Common myeloid progenitor, CD34-positive (primary cell): ENCODE measurements at regions of chr7 and their contacts with region 1.

Region 1: DNA sequence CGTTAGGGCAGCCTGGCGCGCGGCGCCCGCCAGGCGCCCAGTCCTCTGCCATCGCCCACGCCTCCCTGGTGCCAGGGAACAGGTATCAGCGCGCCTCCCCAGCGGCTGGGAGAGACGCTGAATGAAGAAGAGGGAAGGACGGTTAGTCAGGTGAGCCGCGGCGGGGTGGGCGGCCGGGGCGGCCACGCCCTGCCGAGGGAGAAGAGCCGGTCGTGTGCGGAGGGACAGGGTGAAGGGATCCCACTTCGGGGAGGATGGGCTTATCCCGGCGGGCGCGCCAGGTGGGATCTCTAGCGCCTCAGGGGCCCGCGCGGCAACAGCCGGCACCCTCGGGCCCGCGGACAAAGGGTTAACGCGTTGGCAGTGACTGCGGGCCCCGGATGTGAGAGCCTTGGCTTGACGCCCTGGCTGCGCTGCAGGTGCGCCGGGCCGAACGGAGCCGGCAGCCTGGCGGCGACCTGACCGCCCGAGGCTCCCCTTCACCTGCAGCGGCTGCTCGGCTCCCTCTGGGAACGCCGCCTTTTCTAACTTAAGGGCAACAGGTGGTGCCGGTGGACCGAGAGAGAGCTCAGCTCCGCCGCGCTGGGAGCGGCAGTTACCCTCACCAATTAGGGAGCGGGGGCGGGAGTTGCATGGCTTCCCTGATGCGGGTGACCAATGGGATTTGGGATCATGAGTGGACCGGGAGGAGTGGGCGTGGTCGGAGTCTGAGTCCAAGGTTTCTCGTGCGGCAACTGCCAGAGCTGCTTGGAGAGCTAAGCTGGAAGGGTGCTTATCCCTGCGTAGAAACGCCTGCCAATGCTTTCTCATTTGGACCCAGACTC is at the start of gene ARL4A:
- DNase-seq: peak; percentile 97 to 98 (median 97)
- H3K4me3 ChIP-seq: peak within 1 kb of the TSS; percentile 72 to 98 (median 90)
- H3K27ac ChIP-seq: peak within 1 kb of the TSS; percentile 86 to 96
- H3K4me1 ChIP-seq: peaks cover 3 to 31% (median 10%) of the 10 kb centered on the region in 4 experiments
- H3K27me3 ChIP-seq: no peaks in the 10 kb centered on the region

Region 2: DNA sequence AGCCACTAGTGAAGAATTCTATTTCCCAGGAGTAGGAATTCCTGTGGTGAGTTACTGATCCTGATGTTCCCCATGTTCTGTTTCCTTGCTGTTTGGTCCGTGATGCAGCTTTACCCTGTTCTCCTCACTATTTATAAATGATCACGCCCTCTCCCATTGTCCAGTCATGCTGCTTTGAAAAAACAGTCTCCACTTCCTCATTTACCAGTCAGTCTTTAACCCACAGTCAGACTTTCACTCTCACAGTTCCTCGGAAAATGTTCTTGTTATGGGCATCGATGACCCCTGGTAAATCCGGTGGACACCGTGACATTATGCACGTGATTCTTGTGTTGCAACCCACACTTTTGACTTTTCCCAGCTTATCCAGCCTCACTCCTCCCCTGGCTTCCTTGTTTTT is 102.2 kb before region 1 on chr7:
- CTCF ChIA-PET with region 1: no interaction called
- POLR2A ChIA-PET with region 1: no interaction called
- DNase-seq: peak; percentile 25 to 84 (median 73)
- H3K4me3 ChIP-seq: peak overlapping the region in 2 of 7 experiments; percentile 1 to 26
- H3K27ac ChIP-seq: no peak overlapping the region
- H3K4me1 ChIP-seq: peaks cover 0 to 8% (median 6%) of the 10 kb centered on the region in 4 experiments
- H3K27me3 ChIP-seq: no peaks in the 10 kb centered on the region

Region 3: DNA sequence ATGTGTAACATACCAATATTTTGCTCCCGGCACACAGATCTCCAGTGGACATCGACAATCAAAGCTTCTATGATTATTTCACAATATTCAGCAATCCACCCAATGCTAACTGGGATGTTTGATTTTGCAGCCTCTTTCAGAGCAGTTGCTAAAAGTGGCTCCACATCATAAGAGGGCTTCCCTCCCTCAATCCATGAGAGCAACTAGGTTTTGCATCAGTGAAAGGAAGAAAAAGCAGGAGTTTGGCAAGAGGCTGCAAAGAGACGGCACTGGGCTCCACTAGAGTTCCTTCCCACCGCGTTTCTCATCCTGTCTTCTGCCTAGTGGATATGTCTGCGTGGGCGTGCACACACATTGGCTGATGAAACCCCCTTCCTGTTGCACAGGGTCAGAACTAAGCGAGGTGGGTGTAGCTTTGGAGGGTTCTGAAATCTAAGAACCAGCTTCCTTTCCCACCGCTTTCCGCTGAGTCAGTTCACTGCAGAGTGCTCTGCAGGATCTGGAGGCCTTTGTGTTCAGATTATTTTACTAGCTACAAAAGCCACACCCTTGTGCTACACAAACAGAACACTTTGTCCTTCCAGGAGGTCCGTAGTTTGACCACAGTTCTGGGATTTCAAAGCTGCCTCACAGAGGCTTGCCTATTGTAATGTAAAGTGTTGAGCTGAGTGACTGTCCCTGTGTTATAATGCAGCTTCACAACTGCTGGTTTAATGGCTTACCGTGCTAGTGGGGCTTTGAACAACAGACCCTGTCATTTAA is 28.4 kb after region 1 on chr7:
- CTCF ChIA-PET with region 1: interaction called, 11 read pairs
- POLR2A ChIA-PET with region 1: interaction called, 3 read pairs
- DNase-seq: peak; percentile 49 to 78 (median 75)
- H3K4me3 ChIP-seq: peak overlapping the region in 4 of 7 experiments; percentile 17 to 67 (median 50)
- H3K27ac ChIP-seq: peak overlapping the region; percentile 42 to 75
- H3K4me1 ChIP-seq: peaks cover 5 to 39% (median 25%) of the 10 kb centered on the region in 4 experiments
- H3K27me3 ChIP-seq: no peaks in the 10 kb centered on the region

Region 4: GRCh38 chr7:13262929-13263530 is 575.9 kb after region 1 on chr7:
- CTCF ChIA-PET with region 1: interaction called, 65 read pairs
- POLR2A ChIA-PET with region 1: no interaction called
- DNase-seq: peak; percentile 45 to 76 (median 62)
- H3K4me3 ChIP-seq: no peak overlapping the region
- H3K27ac ChIP-seq: no peak overlapping the region
- H3K4me1 ChIP-seq: no peaks in the 10 kb centered on the region
- H3K27me3 ChIP-seq: no peaks in the 10 kb centered on the region